K562 (cell line): ENCODE measurements at regions of chr6 and their contacts with region 1.

Region 1: GRCh38 chr6:109705258-109705657 is 14.2 kb downstream of the FIG4 start:
- DNase-seq: peak; percentile 72 to 87 (median 76)
- ATAC-seq: peak; percentile 99
- H3K4me3 ChIP-seq: no peak overlapping the region
- H3K27ac ChIP-seq: no peak overlapping the region
- H3K4me1 ChIP-seq: no peaks in the 10 kb centered on the region
- H3K27me3 ChIP-seq: no peaks in the 10 kb centered on the region
- CTCF ChIP-seq: peak; percentile 99 to 100 (median 99)
- EP300 ChIP-seq: no peak
- POLR2A ChIP-seq: no peak
- RAD21 ChIP-seq: peak; percentile 100

Region 2: GRCh38 chr6:109526905-109527628 is 178.2 kb before region 1 on chr6:
- CTCF ChIA-PET with region 1: interaction called, 6 read pairs
- POLR2A ChIA-PET with region 1: no interaction called
- in situ Hi-C with region 1: loop called (anchors 10 kb)
- intact Hi-C with region 1: loop called (anchors 2 kb)
- DNase-seq: peak; percentile 33 to 80 (median 48)
- ATAC-seq: peak; percentile 98
- H3K4me3 ChIP-seq: no peak overlapping the region
- H3K27ac ChIP-seq: no peak overlapping the region
- H3K4me1 ChIP-seq: no peaks in the 10 kb centered on the region
- H3K27me3 ChIP-seq: peaks cover 9 to 14% of the 10 kb centered on the region in 2 experiments; a peak in 2 of 5 replicates
- CTCF ChIP-seq: peak; percentile 57 to 83 (median 69)
- EP300 ChIP-seq: no peak
- POLR2A ChIP-seq: no peak
- RAD21 ChIP-seq: peak; percentile 74 to 85

Region 3: DNA sequence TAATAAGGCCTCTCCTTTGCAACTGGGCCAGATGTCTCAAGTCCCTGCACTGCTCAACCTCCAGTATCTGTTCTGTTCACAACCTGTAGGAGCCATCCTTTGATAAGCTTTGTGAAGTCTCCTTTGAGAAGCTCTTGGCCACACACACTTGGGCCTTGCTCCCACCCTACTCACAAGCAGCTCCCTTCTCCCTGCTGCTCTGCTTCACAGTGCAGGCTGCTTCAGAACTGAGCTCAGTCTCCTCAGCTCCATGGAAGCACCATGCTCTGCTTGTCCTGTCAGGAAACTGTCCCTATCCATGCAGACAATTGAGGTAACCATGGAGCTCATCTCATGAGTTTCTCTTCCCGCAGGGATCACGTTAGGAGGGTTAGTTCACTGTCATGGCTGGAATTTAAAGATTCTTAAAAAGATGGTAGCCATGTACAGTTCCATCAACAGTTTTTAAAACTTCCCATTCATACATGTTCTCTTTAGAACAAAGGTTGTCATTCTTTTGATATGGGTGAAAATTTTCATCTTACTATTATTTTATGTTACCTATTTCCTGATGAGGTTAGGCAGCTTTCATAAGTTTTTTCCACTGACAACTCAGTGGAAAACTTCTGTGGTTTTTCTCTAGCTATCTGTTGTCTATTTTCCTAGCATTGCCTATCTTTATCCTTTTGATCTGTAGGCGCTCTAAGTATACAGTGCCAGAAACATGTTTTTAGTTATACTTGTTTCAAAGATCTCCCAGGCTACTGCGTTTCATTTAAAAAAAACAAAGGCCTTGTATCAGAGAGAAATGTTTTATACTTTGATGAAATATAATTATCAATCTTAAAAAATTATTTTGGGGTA is 76.9 kb before region 1 on chr6:
- CTCF ChIA-PET with region 1: no interaction called
- POLR2A ChIA-PET with region 1: no interaction called
- in situ Hi-C with region 1: no loop called
- intact Hi-C with region 1: no loop called
- DNase-seq: no peak
- ATAC-seq: no peak
- H3K4me3 ChIP-seq: no peak overlapping the region
- H3K27ac ChIP-seq: no peak overlapping the region
- H3K4me1 ChIP-seq: no peaks in the 10 kb centered on the region
- H3K27me3 ChIP-seq: no peaks in the 10 kb centered on the region; a peak in 1 of 5 replicates
- CTCF ChIP-seq: no peak
- EP300 ChIP-seq: no peak
- POLR2A ChIP-seq: no peak
- RAD21 ChIP-seq: no peak

Region 4: DNA sequence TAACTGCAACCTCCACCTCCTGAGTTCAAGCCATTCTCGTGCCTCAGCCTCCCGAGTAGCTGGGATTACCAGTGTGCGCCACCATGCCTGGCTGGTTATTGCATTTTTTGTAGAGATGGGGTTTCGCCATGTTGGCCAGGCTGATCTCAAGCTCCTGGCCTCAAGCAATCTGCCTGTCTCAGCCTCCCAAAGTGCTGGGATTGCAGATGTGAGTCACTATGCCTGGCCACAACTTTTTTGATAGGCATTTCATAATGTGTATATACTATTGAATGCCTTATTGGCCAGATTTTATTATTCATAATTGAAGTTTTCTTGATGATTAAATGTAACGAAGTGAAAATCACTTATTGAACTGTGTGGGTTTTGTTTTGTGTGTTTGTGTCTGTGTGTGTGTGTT is 13.7 kb after region 1 on chr6:
- CTCF ChIA-PET with region 1: no interaction called
- POLR2A ChIA-PET with region 1: no interaction called
- in situ Hi-C with region 1: no loop called
- intact Hi-C with region 1: no loop called
- DNase-seq: no peak
- ATAC-seq: no peak
- H3K4me3 ChIP-seq: no peak overlapping the region
- H3K27ac ChIP-seq: no peak overlapping the region
- H3K4me1 ChIP-seq: no peaks in the 10 kb centered on the region
- H3K27me3 ChIP-seq: no peaks in the 10 kb centered on the region
- CTCF ChIP-seq: no peak
- EP300 ChIP-seq: no peak
- POLR2A ChIP-seq: no peak
- RAD21 ChIP-seq: no peak

Region 5: DNA sequence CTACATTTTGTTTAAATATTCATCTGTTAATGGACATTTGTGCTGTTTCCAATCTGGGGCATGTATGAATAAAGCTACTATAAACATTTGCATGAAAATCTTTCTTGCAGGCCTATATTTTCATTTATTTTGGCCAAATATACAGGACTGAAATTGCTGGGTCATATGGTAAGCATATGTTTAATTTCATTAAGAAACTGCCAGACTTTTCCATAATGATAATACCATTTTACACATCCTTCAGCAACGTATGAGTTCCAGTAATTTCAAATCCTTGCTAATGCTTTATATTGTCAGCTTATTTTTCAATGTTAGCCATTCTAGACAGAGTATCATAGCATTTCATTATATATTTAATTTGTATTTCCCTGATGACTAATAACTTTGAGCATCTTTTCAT is 323.9 kb after region 1 on chr6:
- CTCF ChIA-PET with region 1: no interaction called
- POLR2A ChIA-PET with region 1: no interaction called
- in situ Hi-C with region 1: loop called (anchors 5 kb)
- intact Hi-C with region 1: no loop called
- DNase-seq: no peak
- ATAC-seq: no peak
- H3K4me3 ChIP-seq: no peak overlapping the region
- H3K27ac ChIP-seq: no peak overlapping the region
- H3K4me1 ChIP-seq: no peaks in the 10 kb centered on the region
- H3K27me3 ChIP-seq: peaks cover 0 to 13% of the 10 kb centered on the region in 2 experiments; a peak in 2 of 5 replicates
- CTCF ChIP-seq: no peak
- EP300 ChIP-seq: no peak
- POLR2A ChIP-seq: no peak
- RAD21 ChIP-seq: no peak

Region 6: DNA sequence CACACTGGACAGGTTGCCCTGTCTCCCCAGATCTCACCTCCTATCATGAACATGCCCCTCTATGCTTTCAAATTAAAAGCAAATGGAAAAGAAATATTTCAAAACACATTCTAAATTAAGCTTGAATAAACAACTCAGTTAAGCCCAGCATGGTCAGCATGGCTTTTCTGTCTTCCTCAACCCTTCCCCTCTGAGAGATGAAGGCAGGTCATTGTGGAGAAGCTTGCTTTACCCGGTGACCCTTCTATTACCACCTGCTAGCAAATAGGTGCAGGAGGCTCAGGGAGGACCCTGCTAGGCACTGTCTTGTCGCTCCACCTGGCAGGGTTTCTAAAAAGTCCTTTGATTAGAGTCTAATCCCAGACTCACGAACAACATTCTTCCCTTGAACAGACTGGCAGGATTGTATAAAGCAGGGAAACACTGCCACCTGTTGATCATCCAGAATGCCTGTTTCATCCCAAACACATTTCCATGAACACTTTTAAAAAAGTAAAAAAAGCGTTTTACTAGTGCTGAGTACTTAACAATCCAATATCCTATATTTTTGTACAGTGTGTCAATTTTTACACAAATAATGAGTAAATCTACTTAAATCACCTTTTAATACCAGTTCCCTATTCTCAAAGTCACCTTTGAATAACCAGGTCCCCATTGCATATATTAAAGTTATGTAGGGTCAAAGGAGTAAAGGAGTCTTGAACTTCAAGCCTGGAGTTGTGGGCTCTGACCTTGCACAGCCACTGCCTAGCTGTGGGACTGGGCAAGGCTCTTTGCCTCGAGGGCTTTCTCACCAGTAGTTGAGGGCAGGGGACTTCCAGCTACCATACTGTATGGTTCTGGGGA is 348.4 kb after region 1 on chr6:
- CTCF ChIA-PET with region 1: interaction called, 47 read pairs
- POLR2A ChIA-PET with region 1: no interaction called
- in situ Hi-C with region 1: no loop called
- intact Hi-C with region 1: no loop called
- DNase-seq: peak; percentile 29 to 45 (median 35)
- ATAC-seq: peak; percentile 75; the same call in 2 of the 3 replicates
- H3K4me3 ChIP-seq: no peak overlapping the region
- H3K27ac ChIP-seq: no peak overlapping the region
- H3K4me1 ChIP-seq: no peaks in the 10 kb centered on the region
- H3K27me3 ChIP-seq: peaks cover 2 to 30% of the 10 kb centered on the region in 2 experiments
- CTCF ChIP-seq: peak; percentile 52 to 77 (median 70)
- EP300 ChIP-seq: no peak
- POLR2A ChIP-seq: no peak
- RAD21 ChIP-seq: peak; percentile 83

Region 7: GRCh38 chr6:110389689-110390382 is 684.6 kb after region 1 on chr6:
- CTCF ChIA-PET with region 1: interaction called, 15 read pairs
- POLR2A ChIA-PET with region 1: no interaction called
- in situ Hi-C with region 1: loop called (anchors 5 kb)
- intact Hi-C with region 1: loop called (anchors 1 kb)
- DNase-seq: peak in 1 of 4 experiments; percentile 23
- ATAC-seq: peak; percentile 42; the same call in 1 of the 3 replicates
- H3K4me3 ChIP-seq: no peak overlapping the region
- H3K27ac ChIP-seq: no peak overlapping the region
- H3K4me1 ChIP-seq: peaks cover 0 to 3% of the 10 kb centered on the region in 2 experiments; a peak in 2 of 5 replicates
- H3K27me3 ChIP-seq: peaks cover 0 to 12% of the 10 kb centered on the region in 2 experiments; a peak in 2 of 5 replicates
- CTCF ChIP-seq: no peak
- EP300 ChIP-seq: no peak; the same call in 1 of the 2 replicates
- POLR2A ChIP-seq: no peak
- RAD21 ChIP-seq: no peak